ENCODE measurements at regions of chr7 and their contacts with region 1.

Region 1: DNA sequence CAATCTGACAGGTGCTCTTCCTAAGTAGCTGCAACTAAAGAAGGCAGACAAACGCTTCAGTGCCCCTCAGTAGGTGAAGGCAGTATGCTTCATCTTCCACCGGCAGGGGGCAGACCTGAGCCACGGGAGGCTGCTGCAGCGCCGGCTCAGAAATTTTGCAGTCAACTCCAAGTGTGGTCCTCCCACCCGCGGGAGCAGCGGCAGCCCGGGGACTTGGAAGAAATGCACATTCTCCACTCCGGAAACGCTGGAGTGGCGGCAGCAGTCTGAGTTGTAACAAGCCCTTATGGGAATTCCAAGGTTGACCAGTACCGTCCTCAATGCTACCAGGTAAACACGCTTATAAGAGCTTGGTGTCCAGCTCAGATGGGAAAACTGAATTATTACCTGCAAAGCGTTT is 3.4 kb downstream of the IGFBP3 start:
- DNase-seq: peak; percentile 87
- H3K4me3 ChIP-seq: peak overlapping the region; percentile 25 to 72
- H3K27ac ChIP-seq: no peak overlapping the region
- H3K4me1 ChIP-seq: peaks cover 8 to 28% of the 10 kb centered on the region in 2 experiments
- H3K27me3 ChIP-seq: no peaks in the 10 kb centered on the region
- CTCF ChIP-seq: peak; percentile 100
- EP300 ChIP-seq: no peak
- RAD21 ChIP-seq: peak; percentile 86

Region 2: GRCh38 chr7:45902820-45903219 is 14.8 kb before region 1 on chr7:
- CTCF ChIA-PET with region 1: interaction called, 34 read pairs
- POLR2A ChIA-PET with region 1: no interaction called
- DNase-seq: no peak
- H3K4me3 ChIP-seq: no peak overlapping the region
- H3K27ac ChIP-seq: no peak overlapping the region
- H3K4me1 ChIP-seq: no peaks in the 10 kb centered on the region
- H3K27me3 ChIP-seq: no peaks in the 10 kb centered on the region; the same call in 1 of the 2 replicates
- CTCF ChIP-seq: peak; percentile 13; the same call in 1 of the 2 replicates
- EP300 ChIP-seq: no peak
- RAD21 ChIP-seq: no peak

Region 3: GRCh38 chr7:46352004-46352954 is 434.6 kb after region 1 on chr7:
- CTCF ChIA-PET with region 1: interaction called, 109 read pairs
- POLR2A ChIA-PET with region 1: no interaction called
- DNase-seq: peak; percentile 69
- H3K4me3 ChIP-seq: no peak overlapping the region; a peak in 1 of 4 replicates
- H3K27ac ChIP-seq: no peak overlapping the region
- H3K4me1 ChIP-seq: peaks cover 0 to 16% of the 10 kb centered on the region in 2 experiments
- H3K27me3 ChIP-seq: no peaks in the 10 kb centered on the region
- CTCF ChIP-seq: peak; percentile 93
- EP300 ChIP-seq: no peak
- RAD21 ChIP-seq: peak; percentile 96

Region 4: DNA sequence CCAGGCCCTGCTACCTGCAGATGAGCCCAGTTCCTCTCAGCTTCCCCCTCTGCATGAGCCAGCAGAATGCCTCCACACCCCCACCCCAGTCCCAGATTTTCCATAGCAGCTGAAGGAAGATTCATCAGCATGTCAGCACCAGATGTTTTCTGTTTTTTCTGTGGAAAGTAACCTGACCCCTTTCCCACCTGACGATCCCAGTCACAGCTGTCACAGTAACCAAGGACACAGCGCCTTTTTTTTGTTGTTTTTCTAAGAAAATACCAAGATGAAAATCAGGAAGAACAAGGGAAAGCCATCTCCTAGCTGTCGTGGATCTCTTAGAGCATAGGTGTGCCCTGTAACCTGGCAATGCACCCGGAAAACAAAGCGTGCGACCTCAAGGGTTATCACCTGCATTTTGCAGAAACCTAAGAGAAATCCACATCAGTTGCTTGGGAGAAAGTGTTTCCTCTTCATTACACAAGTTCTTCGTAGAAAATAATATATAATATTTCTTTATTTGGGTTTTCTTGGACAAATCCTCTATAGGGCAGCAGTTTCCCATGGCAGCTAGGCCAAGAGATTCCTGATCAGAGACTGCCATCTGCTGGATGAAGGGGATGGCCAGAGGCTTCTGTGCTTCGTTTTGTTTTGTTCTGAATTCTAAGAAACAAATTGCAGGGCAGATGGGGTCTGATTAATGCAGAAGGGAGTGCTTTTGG is 1262.3 kb after region 1 on chr7:
- CTCF ChIA-PET with region 1: interaction called, 227 read pairs
- POLR2A ChIA-PET with region 1: no interaction called
- DNase-seq: peak; percentile 73
- H3K4me3 ChIP-seq: no peak overlapping the region; a peak in 1 of 4 replicates
- H3K27ac ChIP-seq: no peak overlapping the region
- H3K4me1 ChIP-seq: no peaks in the 10 kb centered on the region; a peak in 1 of 4 replicates
- H3K27me3 ChIP-seq: peaks cover 16% of the 10 kb centered on the region; the same call in 1 of the 2 replicates
- CTCF ChIP-seq: peak; percentile 99
- EP300 ChIP-seq: no peak
- RAD21 ChIP-seq: peak; percentile 99